Activated CD4-positive, alpha-beta memory T cell treated with anti-CD3 and anti-CD28 coated beads for 36 hours (primary cell): ENCODE measurements at regions of chr2 and their contacts with region 1.

Region 1: DNA sequence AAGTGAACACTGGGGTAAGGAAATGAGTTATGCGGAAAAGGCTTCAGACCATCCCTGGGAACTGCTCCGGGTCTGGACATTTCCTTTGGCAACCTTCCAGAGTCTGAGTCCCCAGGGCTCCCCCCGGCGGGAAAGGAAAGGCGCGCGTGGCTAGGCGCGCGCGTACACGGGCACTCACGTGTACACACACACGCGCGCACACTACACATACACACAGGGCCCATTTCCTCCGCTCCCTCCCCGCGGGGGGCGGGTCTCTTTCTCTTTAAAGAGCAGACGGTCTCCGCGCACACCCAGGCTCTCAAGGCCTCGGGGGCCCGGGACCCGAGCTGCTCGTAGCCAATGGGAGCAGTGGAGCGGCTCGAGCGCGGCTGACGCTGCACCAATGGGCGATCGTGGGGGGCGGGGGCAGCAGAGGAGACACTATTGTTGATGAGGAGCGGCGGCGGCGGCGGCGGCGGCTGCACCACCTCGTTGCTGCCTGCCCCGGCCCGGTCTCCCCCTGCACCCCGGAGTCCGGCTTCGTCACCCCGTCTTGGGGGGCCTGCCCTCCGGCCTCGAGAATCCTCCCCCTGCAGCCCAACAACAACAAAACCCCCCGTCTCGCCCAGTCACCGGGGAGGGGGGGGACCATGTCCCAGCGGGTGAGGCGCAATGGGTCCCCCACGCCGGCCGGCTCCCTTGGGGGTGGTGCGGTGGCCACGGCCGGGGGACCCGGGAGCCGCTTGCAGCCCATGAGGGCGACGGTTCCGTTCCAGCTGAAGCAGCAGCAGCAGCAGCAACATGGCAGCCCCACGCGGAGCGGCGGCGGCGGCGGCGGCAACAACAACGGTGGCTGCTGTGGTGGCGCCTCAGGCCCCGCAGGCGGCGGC is at the start of gene FAM117B:
- DNase-seq: peak; percentile 99
- H3K4me3 Mint-ChIP-seq: peak within 1 kb of the TSS; percentile 95
- H3K27ac Mint-ChIP-seq: peak within 1 kb of the TSS; percentile 94
- H3K4me1 Mint-ChIP-seq: peaks cover 43% of the 10 kb centered on the region
- H3K27me3 Mint-ChIP-seq: no peaks in the 10 kb centered on the region
- total RNA-seq, gene FAM117B: 5.8 to 5.9 TPM

Region 2: DNA sequence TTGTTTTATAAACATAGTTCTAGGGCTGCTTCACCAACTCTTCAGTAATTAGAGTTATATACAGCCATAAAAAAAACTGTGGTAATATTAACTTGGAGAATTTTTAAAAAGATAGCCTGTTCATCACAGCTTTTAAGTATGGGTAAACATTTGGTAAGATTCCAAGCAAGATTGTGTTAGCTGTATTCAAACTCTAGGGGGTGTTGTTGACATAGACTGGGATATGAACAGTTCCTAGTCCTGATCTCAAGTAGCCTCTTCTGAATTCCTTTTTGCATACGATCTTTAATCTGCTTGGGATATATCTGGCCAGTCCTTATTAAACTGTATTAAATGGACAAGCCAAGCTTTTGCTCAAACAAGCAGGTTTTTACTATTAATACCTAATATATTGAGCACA is 355.8 kb before region 1 on chr2:
- CTCF ChIA-PET with region 1: no interaction called
- POLR2A ChIA-PET with region 1: no interaction called
- intact Hi-C with region 1: loop called (anchors 2 kb)
- DNase-seq: no peak
- H3K4me3 Mint-ChIP-seq: no peak overlapping the region
- H3K27ac Mint-ChIP-seq: peak overlapping the region; percentile 89
- H3K4me1 Mint-ChIP-seq: peaks cover 60% of the 10 kb centered on the region
- H3K27me3 Mint-ChIP-seq: no peaks in the 10 kb centered on the region

Region 3: DNA sequence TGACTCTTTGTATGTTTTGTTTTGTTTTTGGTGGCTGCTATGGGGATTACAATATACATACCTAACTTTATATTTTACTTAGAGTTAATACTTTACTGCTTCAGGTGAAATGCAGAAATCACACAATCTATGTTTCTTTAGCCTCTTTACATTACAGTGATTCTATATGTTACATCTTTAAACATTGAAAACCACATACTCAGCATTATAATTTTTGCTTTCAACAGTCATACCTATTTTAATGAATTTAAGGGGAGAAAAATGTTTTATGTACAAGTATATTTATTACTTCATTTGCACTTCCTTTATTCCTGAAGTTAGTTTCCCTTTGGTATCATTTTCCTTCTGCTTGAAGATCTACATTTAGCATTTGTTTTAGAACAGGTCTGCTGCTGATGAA is 23.1 kb after region 1 on chr2:
- CTCF ChIA-PET with region 1: interaction called, 3 read pairs
- POLR2A ChIA-PET with region 1: interaction called, 3 read pairs
- intact Hi-C with region 1: loop called (anchors 2 kb)
- DNase-seq: no peak
- H3K4me3 Mint-ChIP-seq: no peak overlapping the region
- H3K27ac Mint-ChIP-seq: no peak overlapping the region
- H3K4me1 Mint-ChIP-seq: peaks cover 68% of the 10 kb centered on the region
- H3K27me3 Mint-ChIP-seq: no peaks in the 10 kb centered on the region

Region 4: DNA sequence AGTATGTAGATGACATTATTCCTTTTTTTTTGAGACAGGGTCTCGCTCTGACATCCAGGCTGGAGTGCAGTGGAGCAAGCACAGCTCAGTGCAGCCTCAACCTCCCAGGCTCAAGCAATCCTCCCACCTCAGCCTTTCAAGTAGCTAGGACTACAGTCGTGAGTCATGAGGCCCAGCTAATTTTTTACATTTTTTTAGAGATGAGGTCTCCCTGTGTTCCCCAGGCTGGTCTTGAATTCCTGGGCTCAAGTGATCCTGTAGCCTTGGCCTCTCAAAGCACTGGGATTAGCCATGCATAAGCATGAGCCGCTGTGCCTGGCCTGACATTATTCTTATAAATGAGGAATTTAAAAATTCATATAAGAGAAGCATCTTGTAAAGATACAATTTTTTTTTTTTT is 86.8 kb after region 1 on chr2:
- CTCF ChIA-PET with region 1: no interaction called
- POLR2A ChIA-PET with region 1: no interaction called
- intact Hi-C with region 1: no loop called
- DNase-seq: no peak
- H3K4me3 Mint-ChIP-seq: no peak overlapping the region
- H3K27ac Mint-ChIP-seq: no peak overlapping the region
- H3K4me1 Mint-ChIP-seq: peaks cover 16% of the 10 kb centered on the region
- H3K27me3 Mint-ChIP-seq: no peaks in the 10 kb centered on the region

Region 5: DNA sequence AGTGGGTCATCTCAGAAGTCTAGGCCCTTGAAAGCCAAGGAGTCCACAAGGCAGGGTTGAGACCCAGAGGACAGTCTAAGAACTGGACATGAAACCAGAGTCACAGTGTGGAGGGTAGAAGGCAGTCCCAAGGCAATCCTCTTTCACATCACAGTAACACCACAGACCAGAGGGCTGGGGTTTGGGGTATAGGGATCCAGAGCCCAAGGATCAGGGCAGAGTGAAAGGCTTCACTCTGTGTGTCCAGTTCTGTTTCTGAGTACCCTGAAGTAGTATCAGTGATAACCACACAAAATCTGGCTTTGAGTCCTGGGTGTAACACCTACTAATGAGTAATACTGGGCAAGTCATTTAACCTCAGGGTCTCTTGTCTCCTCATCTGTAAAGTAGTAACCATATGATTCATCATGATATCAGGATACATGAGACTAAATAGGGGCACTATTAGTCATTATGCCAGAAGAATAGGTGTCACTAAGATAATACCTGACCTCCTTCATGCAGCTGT is 145.8 kb after region 1 on chr2:
- CTCF ChIA-PET with region 1: no interaction called
- POLR2A ChIA-PET with region 1: no interaction called
- intact Hi-C with region 1: loop called (anchors 1 kb)
- DNase-seq: peak; percentile 24
- H3K4me3 Mint-ChIP-seq: no peak overlapping the region
- H3K27ac Mint-ChIP-seq: no peak overlapping the region
- H3K4me1 Mint-ChIP-seq: peaks cover 14% of the 10 kb centered on the region
- H3K27me3 Mint-ChIP-seq: no peaks in the 10 kb centered on the region

Region 6: GRCh38 chr2:203014456-203015199 is 379.8 kb after region 1 on chr2 and contains the start of gene NBEAL1:
- CTCF ChIA-PET with region 1: no interaction called
- POLR2A ChIA-PET with region 1: interaction called, 3 read pairs
- intact Hi-C with region 1: loop called (anchors 1 kb)
- DNase-seq: peak; percentile 98
- H3K4me3 Mint-ChIP-seq: peak within 1 kb of the TSS; percentile 94
- H3K27ac Mint-ChIP-seq: peak within 1 kb of the TSS; percentile 90
- H3K4me1 Mint-ChIP-seq: peaks cover 31% of the 10 kb centered on the region
- H3K27me3 Mint-ChIP-seq: no peaks in the 10 kb centered on the region
- total RNA-seq, gene NBEAL1: 10.6 to 11.6 TPM

Region 7: GRCh38 chr2:203934041-203934492 is 1299.3 kb after region 1 on chr2:
- CTCF ChIA-PET with region 1: no interaction called
- POLR2A ChIA-PET with region 1: no interaction called
- intact Hi-C with region 1: loop called (anchors 2 kb)
- DNase-seq: peak; percentile 76
- H3K4me3 Mint-ChIP-seq: peak overlapping the region; percentile 74
- H3K27ac Mint-ChIP-seq: peak overlapping the region; percentile 94
- H3K4me1 Mint-ChIP-seq: peaks cover 59% of the 10 kb centered on the region
- H3K27me3 Mint-ChIP-seq: no peaks in the 10 kb centered on the region